ENCODE measurements at regions of chr11 and their contacts with region 1.

Region 1: DNA sequence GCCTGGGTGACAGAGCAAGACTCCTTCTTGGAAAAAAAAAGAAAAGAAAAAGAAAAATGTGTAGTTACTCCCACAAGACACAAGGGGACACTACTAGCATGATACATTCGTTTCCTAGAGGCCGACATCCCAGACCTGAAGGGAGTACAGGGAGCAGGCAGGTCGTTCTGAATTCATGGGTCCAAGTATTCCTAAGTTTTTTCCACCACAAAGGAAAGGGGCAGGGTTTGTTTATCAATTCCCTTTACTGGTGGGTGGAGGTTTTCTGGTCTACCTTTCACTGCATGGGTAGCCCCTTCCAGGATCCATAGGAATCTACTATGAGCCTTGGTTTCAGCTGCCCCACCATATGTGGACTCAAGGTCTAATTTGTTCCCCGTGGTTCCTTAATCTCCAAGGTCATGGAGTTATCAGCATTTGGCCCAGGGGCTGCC is 11.8 kb downstream of the TIGD3 start:
- DNase-seq: peak; percentile 84
- ATAC-seq: peak; percentile 81
- H3K4me3 ChIP-seq: peak overlapping the region in 2 of 3 experiments; percentile 15 to 50; a peak in 2 of 6 replicates
- H3K27ac ChIP-seq: no peak overlapping the region
- H3K4me1 ChIP-seq: peaks cover 48% of the 10 kb centered on the region
- H3K27me3 ChIP-seq: no peaks in the 10 kb centered on the region
- CTCF ChIP-seq: peak; percentile 88
- EP300 ChIP-seq: no peak
- POLR2A ChIP-seq: no peak
- RAD21 ChIP-seq: peak; percentile 87

Region 2: DNA sequence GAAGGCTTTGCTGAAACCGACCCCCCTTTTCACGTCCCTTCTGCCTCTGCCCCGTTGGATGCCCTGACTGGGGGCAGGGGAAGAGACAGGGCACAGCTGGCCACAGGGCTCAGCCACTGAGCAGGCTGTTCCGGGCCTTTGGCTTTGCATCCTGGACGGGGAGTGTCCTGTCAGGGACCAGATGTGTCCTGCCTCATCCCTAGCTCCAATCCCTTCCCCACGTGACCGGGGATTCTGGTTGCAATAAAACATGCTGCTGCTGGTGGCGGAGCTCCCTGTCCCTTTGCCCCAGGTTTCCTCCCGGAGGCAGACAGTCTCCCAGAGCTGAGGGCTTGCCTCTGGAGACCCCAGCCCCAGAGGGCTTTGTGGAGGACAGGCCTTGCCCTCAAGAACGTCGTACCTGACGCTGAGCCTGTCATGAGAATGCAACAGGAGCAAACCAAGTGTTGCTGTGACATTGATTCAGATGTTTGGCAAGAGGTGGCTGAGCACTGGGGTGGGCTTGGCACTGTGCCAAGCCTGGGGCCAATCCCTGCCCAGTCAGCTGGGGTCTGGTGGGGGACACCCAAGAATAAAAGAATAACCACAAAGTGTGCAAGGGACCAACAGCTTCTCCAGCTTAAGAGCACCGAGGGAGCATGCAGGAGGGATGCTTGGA is 44.4 kb before region 1 on chr11:
- CTCF ChIA-PET with region 1: no interaction called
- POLR2A ChIA-PET with region 1: no interaction called
- in situ Hi-C with region 1: no loop called
- intact Hi-C with region 1: no loop called
- DNase-seq: no peak
- ATAC-seq: no peak
- H3K4me3 ChIP-seq: no peak overlapping the region
- H3K27ac ChIP-seq: no peak overlapping the region
- H3K4me1 ChIP-seq: peaks cover 14% of the 10 kb centered on the region
- H3K27me3 ChIP-seq: no peaks in the 10 kb centered on the region
- CTCF ChIP-seq: no peak
- EP300 ChIP-seq: no peak
- POLR2A ChIP-seq: no peak
- RAD21 ChIP-seq: no peak

Region 3: GRCh38 chr11:65354265-65355012 is 11.9 kb before region 1 on chr11 and contains the start of gene TIGD3:
- CTCF ChIA-PET with region 1: no interaction called
- POLR2A ChIA-PET with region 1: interaction called, 20 read pairs
- in situ Hi-C with region 1: no loop called
- intact Hi-C with region 1: no loop called
- DNase-seq: peak; percentile 92
- ATAC-seq: peak; percentile 79
- H3K4me3 ChIP-seq: peak within 1 kb of the TSS; percentile 70 to 82 (median 77)
- H3K27ac ChIP-seq: peak within 1 kb of the TSS; percentile 64
- H3K4me1 ChIP-seq: peaks cover 42% of the 10 kb centered on the region
- H3K27me3 ChIP-seq: no peaks in the 10 kb centered on the region
- CTCF ChIP-seq: peak; percentile 33
- EP300 ChIP-seq: no peak
- POLR2A ChIP-seq: peak; percentile 45 to 92
- RAD21 ChIP-seq: 0 out of 2 replicates have a peak, but pooled peaks have one; percentile 15
- total RNA-seq, gene TIGD3: 4.0 and 4.9 TPM in 2 replicates

Region 4: GRCh38 chr11:65382033-65382807 is 15.9 kb after region 1 on chr11 and contains the start of gene SLC25A45:
- CTCF ChIA-PET with region 1: no interaction called
- POLR2A ChIA-PET with region 1: interaction called, 31 read pairs
- in situ Hi-C with region 1: no loop called
- intact Hi-C with region 1: loop called (anchors 1 kb)
- DNase-seq: peak; percentile 87
- ATAC-seq: peak; percentile 80
- H3K4me3 ChIP-seq: peak within 1 kb of the TSS; percentile 57 to 82 (median 65)
- H3K27ac ChIP-seq: peak within 1 kb of the TSS; percentile 88
- H3K4me1 ChIP-seq: peaks cover 89% of the 10 kb centered on the region
- H3K27me3 ChIP-seq: no peaks in the 10 kb centered on the region; a peak in 1 of 5 replicates
- CTCF ChIP-seq: peak; percentile 94
- EP300 ChIP-seq: peak in 1 of 2 experiments; percentile 76; a peak in 2 of 4 replicates
- POLR2A ChIP-seq: peak in 1 of 2 experiments; percentile 84; a peak in 2 of 4 replicates
- RAD21 ChIP-seq: peak; percentile 95
- total RNA-seq, gene SLC25A45: 2.1 and 3.4 TPM in 2 replicates

Region 5: DNA sequence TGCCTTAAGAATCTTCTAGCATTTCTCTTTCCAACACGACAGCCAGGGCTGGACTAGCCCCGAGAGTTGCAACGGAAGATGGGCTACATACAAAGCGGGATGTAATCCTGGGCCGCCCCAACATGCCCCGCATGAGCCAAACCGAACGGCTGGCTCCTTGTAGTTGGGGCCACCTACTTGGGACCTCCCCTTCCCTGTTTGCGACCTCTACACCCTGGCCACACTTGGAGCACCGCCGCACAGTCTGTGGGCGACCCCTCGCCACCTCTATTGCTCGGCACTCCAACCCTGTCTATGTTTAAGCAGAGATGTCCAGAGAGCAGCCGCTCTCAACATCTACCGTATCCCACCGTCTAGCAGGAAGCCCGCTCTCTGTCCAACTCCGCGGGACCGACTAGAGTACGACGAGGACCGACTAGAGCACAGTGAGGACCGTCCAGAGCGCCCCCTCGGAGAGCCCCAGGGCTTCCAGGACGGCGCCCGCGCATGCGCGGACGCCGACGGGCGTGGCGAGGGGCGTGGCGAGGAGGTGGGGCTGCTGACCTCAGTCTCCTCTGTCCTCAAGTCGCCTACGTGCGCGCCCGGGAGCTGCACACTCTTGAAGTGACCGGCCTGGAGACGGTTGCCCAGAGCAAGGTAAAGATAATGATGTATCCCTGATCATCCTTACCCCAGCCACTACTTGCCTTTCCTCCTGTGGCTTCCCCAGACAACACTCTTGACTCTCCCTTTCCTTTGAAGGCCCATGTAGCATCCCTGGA is 88.5 kb after region 1 on chr11:
- CTCF ChIA-PET with region 1: no interaction called
- POLR2A ChIA-PET with region 1: no interaction called
- in situ Hi-C with region 1: loop called (anchors 10 kb)
- intact Hi-C with region 1: loop called (anchors 5 kb)
- DNase-seq: peak; percentile 80
- ATAC-seq: peak; percentile 80
- H3K4me3 ChIP-seq: peak overlapping the region; percentile 56 to 75 (median 61)
- H3K27ac ChIP-seq: no peak overlapping the region
- H3K4me1 ChIP-seq: peaks cover 60% of the 10 kb centered on the region
- H3K27me3 ChIP-seq: no peaks in the 10 kb centered on the region
- CTCF ChIP-seq: peak; percentile 69
- EP300 ChIP-seq: no peak
- POLR2A ChIP-seq: peak; percentile 41 to 95; a peak in 3 of 4 replicates
- RAD21 ChIP-seq: no peak

Region 6: GRCh38 chr11:65471410-65471762 is 105.0 kb after region 1 on chr11:
- CTCF ChIA-PET with region 1: interaction called, 11 read pairs
- POLR2A ChIA-PET with region 1: interaction called, 7 read pairs
- in situ Hi-C with region 1: loop called (anchors 10 kb)
- intact Hi-C with region 1: loop called (anchors 1 kb)
- DNase-seq: peak; percentile 73
- ATAC-seq: peak; percentile 92
- H3K4me3 ChIP-seq: peak overlapping the region; percentile 31 to 63 (median 33); a peak in 5 of 6 replicates
- H3K27ac ChIP-seq: no peak overlapping the region
- H3K4me1 ChIP-seq: peaks cover 57% of the 10 kb centered on the region
- H3K27me3 ChIP-seq: no peaks in the 10 kb centered on the region; a peak in 1 of 5 replicates
- CTCF ChIP-seq: peak; percentile 90
- EP300 ChIP-seq: no peak
- POLR2A ChIP-seq: no peak; a peak in 1 of 4 replicates
- RAD21 ChIP-seq: peak; percentile 86

Region 7: DNA sequence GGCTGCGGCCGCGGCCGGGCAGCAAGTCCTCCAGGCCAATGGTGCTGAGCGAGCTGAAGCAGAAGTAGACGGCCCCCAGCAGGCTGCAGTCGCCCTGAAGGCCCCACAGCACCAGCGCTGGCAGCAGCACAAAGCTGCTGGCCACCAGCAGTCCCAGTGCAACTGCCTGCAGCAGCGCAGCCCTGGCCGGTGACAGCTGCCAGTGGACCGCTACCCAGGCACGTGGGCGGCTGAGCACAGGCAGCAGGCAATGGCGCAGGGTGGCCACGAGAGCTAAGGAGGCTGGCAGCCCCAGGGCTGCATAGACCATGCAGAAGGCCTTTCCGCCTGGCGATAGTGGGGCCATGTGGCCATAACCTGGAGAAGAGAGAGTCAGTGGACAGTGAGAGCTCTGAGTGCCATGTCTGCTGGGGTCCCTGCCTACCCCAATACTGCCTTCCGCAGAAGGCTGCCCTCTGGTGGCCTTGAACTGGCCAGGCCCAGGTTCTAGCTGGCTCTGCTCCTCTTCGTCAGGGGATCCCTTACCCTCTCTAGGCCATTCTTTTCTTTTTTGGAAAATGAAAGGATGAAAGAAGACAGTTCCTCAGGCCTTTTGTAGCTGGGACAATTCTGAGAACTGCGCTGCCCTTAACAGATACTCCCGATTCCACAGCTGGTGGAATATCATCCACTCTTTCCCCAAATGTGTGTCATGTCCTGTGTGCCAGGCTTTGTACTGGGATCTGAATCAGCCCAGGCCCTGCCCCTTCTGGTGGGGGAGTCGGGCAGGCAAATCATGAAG is 227.4 kb after region 1 on chr11:
- CTCF ChIA-PET with region 1: no interaction called
- POLR2A ChIA-PET with region 1: no interaction called
- in situ Hi-C with region 1: no loop called
- intact Hi-C with region 1: no loop called
- DNase-seq: no peak
- ATAC-seq: peak; percentile 66
- H3K4me3 ChIP-seq: no peak overlapping the region
- H3K27ac ChIP-seq: no peak overlapping the region
- H3K4me1 ChIP-seq: peaks cover 8% of the 10 kb centered on the region
- H3K27me3 ChIP-seq: no peaks in the 10 kb centered on the region
- CTCF ChIP-seq: peak; percentile 82
- EP300 ChIP-seq: no peak
- POLR2A ChIP-seq: no peak
- RAD21 ChIP-seq: peak; percentile 47; the same call in 1 of the 2 replicates